Activated naive CD4-positive, alpha-beta T cell treated with anti-CD3 and anti-CD28 coated beads for 36 hours (primary cell): ENCODE measurements at regions of chr2 and their contacts with region 1.

Region 1: GRCh38 chr2:201451292-201452057 is at the starts of genes STRADB and TRAK2:
- DNase-seq: peak; percentile 96
- H3K4me3 Mint-ChIP-seq: peak within 1 kb of the TSS; percentile 95
- H3K27ac Mint-ChIP-seq: peak within 1 kb of the TSS; percentile 94
- H3K4me1 Mint-ChIP-seq: peaks cover 51% of the 10 kb centered on the region
- H3K27me3 Mint-ChIP-seq: no peaks in the 10 kb centered on the region
- total RNA-seq, gene STRADB: 17.6 to 19.1 TPM
- total RNA-seq, gene TRAK2: 10.4 TPM

Region 2: GRCh38 chr2:201191132-201191875 is 260.2 kb before region 1 on chr2:
- CTCF ChIA-PET with region 1: no interaction called
- intact Hi-C with region 1: no loop called
- DNase-seq: peak; percentile 37
- H3K4me3 Mint-ChIP-seq: no peak overlapping the region
- H3K27ac Mint-ChIP-seq: peak overlapping the region; percentile 11
- H3K4me1 Mint-ChIP-seq: peaks cover 78% of the 10 kb centered on the region
- H3K27me3 Mint-ChIP-seq: no peaks in the 10 kb centered on the region

Region 3: DNA sequence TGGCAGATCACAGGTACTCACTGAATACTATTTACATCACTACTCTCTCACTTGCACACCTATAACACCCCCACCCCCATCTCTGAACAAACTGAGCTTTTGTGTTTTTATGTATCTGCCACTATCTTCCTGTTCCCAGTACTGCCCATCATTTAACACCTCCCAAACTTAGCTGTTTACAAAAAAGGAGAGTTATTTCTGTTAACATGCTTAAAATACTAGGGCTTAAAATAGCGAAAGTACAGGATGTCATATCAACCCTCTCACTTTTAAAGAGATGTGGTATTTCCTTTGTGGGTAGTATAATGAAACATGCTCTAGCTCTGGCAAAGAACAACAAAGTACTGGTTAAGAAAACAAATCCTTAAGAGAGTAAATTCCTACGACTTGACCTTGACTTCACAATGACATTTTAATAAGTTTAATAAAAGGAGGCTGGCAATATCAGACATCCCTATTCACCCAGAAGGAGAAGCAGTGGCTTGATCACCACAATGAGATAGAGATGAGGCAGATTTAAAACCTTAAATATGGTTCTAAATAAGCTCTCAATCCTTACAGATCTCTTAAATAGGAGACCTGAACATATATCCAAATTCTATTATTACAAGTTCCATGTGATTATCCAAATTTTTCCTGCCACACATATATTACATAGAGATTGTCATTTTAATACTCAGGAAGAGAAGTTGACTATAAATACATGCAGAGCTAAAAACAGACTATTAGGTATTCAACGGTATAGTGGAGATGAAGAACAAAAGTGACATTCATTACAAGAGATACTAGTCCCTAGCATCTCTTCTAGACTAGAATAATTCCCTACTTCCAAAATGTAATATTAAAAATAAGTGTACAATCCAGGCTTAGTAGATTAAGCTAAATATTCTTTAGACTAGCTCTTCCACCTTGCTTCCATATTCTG is 37.1 kb before region 1 on chr2:
- CTCF ChIA-PET with region 1: interaction called, 4 read pairs
- intact Hi-C with region 1: loop called (anchors 1 kb)
- DNase-seq: peak; percentile 9
- H3K4me3 Mint-ChIP-seq: no peak overlapping the region
- H3K27ac Mint-ChIP-seq: no peak overlapping the region
- H3K4me1 Mint-ChIP-seq: peaks cover 23% of the 10 kb centered on the region
- H3K27me3 Mint-ChIP-seq: no peaks in the 10 kb centered on the region

Region 4: DNA sequence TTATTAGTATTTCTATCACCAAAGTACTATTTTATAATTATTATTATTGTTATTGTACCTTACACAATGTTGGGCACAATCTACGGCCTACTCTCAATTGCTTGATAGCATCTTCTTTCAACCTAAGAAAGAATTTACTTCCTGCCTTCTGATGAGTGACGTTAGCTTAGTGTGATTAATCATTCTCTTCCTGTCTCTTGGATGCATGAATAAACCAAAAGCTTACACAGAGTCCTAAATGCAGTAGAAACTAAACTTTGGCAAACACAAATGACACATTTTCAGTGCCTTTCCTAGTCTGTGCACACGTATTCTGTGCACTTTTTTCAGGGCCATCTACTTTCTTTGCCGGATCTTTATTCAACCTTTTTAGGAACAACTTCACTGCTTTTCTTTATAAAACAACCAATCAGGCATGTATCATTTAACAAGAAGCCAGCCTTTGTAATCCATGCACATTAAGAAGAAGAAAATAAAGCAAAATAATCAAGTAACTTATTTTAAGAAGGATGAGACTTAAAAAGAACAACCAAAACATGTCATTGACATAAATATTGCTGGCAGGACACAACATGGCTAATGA is 19.3 kb before region 1 on chr2:
- CTCF ChIA-PET with region 1: interaction called, 4 read pairs
- intact Hi-C with region 1: loop called (anchors 1 kb)
- DNase-seq: no peak
- H3K4me3 Mint-ChIP-seq: peak overlapping the region; percentile 56
- H3K27ac Mint-ChIP-seq: peak overlapping the region; percentile 96
- H3K4me1 Mint-ChIP-seq: peaks cover 45% of the 10 kb centered on the region
- H3K27me3 Mint-ChIP-seq: no peaks in the 10 kb centered on the region

Region 5: DNA sequence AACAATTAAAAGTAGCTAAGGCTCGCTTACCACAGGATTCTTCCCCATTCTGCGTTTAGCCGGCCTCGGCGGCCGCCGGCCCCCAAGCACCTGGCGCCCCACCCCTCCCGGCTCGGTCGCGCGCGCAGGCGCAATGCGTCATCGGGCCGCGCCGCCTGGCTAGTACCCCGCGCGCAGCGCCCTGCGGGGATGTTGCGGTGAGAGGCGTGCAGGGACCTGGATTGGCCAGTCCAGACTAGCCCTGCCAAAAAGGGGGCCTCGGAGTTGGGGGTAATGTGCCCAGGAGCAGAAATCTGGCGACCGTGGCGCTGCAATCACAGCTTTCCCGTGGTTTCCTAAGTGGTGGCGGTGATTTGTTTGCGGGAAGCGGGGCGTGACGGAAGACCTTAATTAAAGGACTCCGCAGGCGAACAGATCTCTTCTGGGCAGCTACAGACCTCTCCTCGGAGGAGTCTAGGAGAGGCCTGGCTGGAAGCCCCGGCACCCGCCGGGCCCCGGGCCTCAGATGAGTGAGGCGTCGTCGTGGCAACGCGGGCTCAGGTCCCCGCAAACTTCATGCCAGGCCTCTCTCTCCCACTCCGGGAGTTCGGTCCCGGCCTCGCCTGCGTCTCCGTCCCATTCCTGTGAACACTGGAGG is 191.2 kb after region 1 on chr2:
- CTCF ChIA-PET with region 1: no interaction called
- intact Hi-C with region 1: loop called (anchors 1 kb)
- DNase-seq: peak; percentile 87
- H3K4me3 Mint-ChIP-seq: peak overlapping the region; percentile 79
- H3K27ac Mint-ChIP-seq: peak overlapping the region; percentile 79
- H3K4me1 Mint-ChIP-seq: peaks cover 11% of the 10 kb centered on the region
- H3K27me3 Mint-ChIP-seq: no peaks in the 10 kb centered on the region

Region 6: DNA sequence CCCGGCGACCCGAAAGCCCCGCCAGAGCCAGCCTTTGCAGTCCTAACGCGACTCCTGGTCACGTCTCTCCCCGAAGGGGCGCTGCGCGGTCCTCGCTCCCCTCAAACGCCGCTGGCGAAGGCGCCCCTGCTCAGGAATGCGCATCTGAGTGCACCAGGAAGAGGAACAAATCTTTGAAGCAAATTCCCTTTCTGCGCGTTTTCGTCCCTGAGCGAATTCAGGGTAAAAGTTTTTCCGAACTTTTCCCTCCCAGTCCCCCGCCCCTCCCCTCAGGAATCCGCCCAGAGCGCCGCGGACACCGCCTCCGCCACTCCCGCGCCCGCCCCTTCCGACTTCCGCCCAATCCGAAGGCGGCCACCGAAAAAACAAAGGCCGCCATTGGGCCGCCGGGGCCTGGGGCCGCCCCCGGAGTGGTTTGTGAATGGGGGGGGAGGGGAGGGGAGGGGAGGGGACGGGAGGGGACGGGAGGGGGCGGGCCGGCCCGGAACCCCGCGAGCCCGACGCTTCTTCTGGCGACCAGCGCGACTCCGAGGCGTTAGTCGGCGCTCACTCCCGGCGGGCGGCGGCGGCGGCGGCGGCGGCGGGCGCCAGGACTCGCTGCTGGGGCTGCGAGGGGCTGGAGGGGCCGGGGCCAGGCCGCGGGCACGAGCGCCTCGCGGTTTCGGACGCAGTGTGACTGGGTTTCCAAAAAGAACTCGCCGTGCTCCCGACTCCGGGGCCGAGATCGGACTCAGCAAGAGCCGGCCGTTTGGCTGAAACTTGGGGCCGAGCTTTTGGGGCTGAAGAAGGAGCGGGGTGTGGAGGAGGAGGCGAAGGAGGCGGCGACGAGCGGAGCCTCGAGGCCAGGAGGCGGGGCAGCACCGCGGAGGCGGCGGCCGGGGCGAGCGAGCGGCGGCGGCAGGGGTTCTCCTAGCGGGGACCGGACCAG is 582.1 kb after region 1 on chr2 and contains the start of gene FZD7:
- CTCF ChIA-PET with region 1: no interaction called
- intact Hi-C with region 1: loop called (anchors 5 kb)
- DNase-seq: peak; percentile 90
- H3K4me3 Mint-ChIP-seq: peak within 1 kb of the TSS; percentile 79
- H3K27ac Mint-ChIP-seq: no peak within 1 kb of the TSS
- H3K4me1 Mint-ChIP-seq: peaks cover 12% of the 10 kb centered on the region
- H3K27me3 Mint-ChIP-seq: peaks cover 18% of the 10 kb centered on the region
- total RNA-seq, gene FZD7: 0.17 to 0.43 TPM